CD8-positive, alpha-beta T cell (primary cell): ENCODE measurements at regions of chr14 and their contacts with region 1.

Region 1: GRCh38 chr14:23006544-23007419 is 3.2 kb downstream of the C14orf93 start:
- DNase-seq: peak; percentile 93 to 99 (median 96)
- ATAC-seq: peak; percentile 92
- H3K4me3 ChIP-seq: peak overlapping the region; percentile 84 to 87
- H3K4me3 Mint-ChIP-seq: peak overlapping the region; percentile 90
- H3K27ac ChIP-seq: peak overlapping the region; percentile 80 to 84
- H3K27ac Mint-ChIP-seq: peak overlapping the region; percentile 98
- H3K4me1 ChIP-seq: peaks cover 20% of the 10 kb centered on the region
- H3K4me1 Mint-ChIP-seq: peaks cover 41% of the 10 kb centered on the region
- H3K27me3 ChIP-seq: no peaks in the 10 kb centered on the region
- H3K27me3 Mint-ChIP-seq: no peaks in the 10 kb centered on the region
- CTCF ChIP-seq: no peak

Region 2: GRCh38 chr14:22955702-22956569 is 50.8 kb before region 1 on chr14:
- CTCF ChIA-PET with region 1: interaction called, 7 read pairs
- POLR2A ChIA-PET with region 1: interaction called, 9 read pairs
- intact Hi-C with region 1: loop called in 1 of 2 experiments (anchors 1 kb)
- DNase-seq: no peak
- ATAC-seq: no peak
- H3K4me3 ChIP-seq: peak overlapping the region; percentile 79 to 95
- H3K4me3 Mint-ChIP-seq: peak overlapping the region; percentile 90
- H3K27ac ChIP-seq: peak overlapping the region; percentile 69 to 84
- H3K27ac Mint-ChIP-seq: peak overlapping the region; percentile 91
- H3K4me1 ChIP-seq: peaks cover 16% of the 10 kb centered on the region
- H3K4me1 Mint-ChIP-seq: peaks cover 16% of the 10 kb centered on the region
- H3K27me3 ChIP-seq: no peaks in the 10 kb centered on the region
- H3K27me3 Mint-ChIP-seq: no peaks in the 10 kb centered on the region
- CTCF ChIP-seq: no peak

Region 3: DNA sequence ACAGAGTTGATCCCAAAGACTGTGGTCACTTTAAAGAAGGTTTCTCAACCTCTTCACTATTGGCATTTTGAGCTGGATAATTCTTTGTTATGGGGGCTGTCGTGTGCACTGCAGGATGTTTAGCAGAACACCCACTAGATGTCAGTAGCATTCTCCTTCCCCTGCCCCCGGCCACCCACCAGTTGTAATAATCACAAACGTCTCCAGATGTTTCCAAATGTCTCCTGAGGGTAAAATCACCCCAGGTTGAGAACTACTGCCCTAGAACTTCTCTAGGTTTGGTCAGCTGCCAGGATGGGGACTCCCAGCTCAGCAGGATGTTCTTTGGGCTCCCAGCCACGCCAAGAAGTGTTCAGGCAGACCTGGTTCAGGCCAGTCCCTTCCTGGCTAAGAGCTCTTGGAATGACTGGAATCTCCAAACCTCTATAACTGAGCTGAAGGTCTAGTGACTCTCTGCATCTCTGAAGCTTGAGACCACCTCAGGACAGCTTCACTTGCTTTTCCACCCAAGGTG is 12.0 kb before region 1 on chr14:
- CTCF ChIA-PET with region 1: interaction called, 59 read pairs
- POLR2A ChIA-PET with region 1: interaction called, 17 read pairs
- intact Hi-C with region 1: no loop called
- DNase-seq: peak in 7 of 9 experiments; percentile 13 to 63 (median 46)
- ATAC-seq: peak; percentile 85
- H3K4me3 ChIP-seq: no peak overlapping the region
- H3K4me3 Mint-ChIP-seq: no peak overlapping the region
- H3K27ac ChIP-seq: no peak overlapping the region
- H3K27ac Mint-ChIP-seq: no peak overlapping the region
- H3K4me1 ChIP-seq: peaks cover 3% of the 10 kb centered on the region
- H3K4me1 Mint-ChIP-seq: peaks cover 5% of the 10 kb centered on the region
- H3K27me3 ChIP-seq: no peaks in the 10 kb centered on the region
- H3K27me3 Mint-ChIP-seq: no peaks in the 10 kb centered on the region
- CTCF ChIP-seq: peak; percentile 46

Region 4: GRCh38 chr14:23025151-23025814 is 18.5 kb after region 1 on chr14:
- CTCF ChIA-PET with region 1: interaction called, 9 read pairs
- POLR2A ChIA-PET with region 1: interaction called, 25 read pairs
- intact Hi-C with region 1: no loop called
- DNase-seq: no peak
- ATAC-seq: no peak
- H3K4me3 ChIP-seq: no peak overlapping the region
- H3K4me3 Mint-ChIP-seq: no peak overlapping the region
- H3K27ac ChIP-seq: no peak overlapping the region
- H3K27ac Mint-ChIP-seq: peak overlapping the region; percentile 72
- H3K4me1 ChIP-seq: peaks cover 32% of the 10 kb centered on the region
- H3K4me1 Mint-ChIP-seq: peaks cover 66% of the 10 kb centered on the region
- H3K27me3 ChIP-seq: no peaks in the 10 kb centered on the region
- H3K27me3 Mint-ChIP-seq: no peaks in the 10 kb centered on the region
- CTCF ChIP-seq: no peak

Region 5: GRCh38 chr14:23034483-23035302 is 27.9 kb after region 1 on chr14 and contains the start of gene PSMB5:
- CTCF ChIA-PET with region 1: interaction called, 7 read pairs
- POLR2A ChIA-PET with region 1: interaction called, 18 read pairs
- intact Hi-C with region 1: loop called (anchors 1 kb)
- DNase-seq: peak; percentile 74 to 97 (median 87)
- ATAC-seq: peak; percentile 91
- H3K4me3 ChIP-seq: peak within 1 kb of the TSS; percentile 67 to 71
- H3K4me3 Mint-ChIP-seq: peak within 1 kb of the TSS; percentile 90
- H3K27ac ChIP-seq: peak within 1 kb of the TSS; percentile 75 to 97
- H3K27ac Mint-ChIP-seq: peak within 1 kb of the TSS; percentile 98
- H3K4me1 ChIP-seq: peaks cover 21% of the 10 kb centered on the region
- H3K4me1 Mint-ChIP-seq: peaks cover 34% of the 10 kb centered on the region
- H3K27me3 ChIP-seq: no peaks in the 10 kb centered on the region
- H3K27me3 Mint-ChIP-seq: no peaks in the 10 kb centered on the region
- CTCF ChIP-seq: no peak
- total RNA-seq, gene PSMB5: 18.6 to 20.2 TPM

Region 6: GRCh38 chr14:23095196-23096108 is 88.7 kb after region 1 on chr14 and contains the start of gene C14orf119:
- CTCF ChIA-PET with region 1: no interaction called
- POLR2A ChIA-PET with region 1: interaction called, 13 read pairs
- intact Hi-C with region 1: no loop called
- DNase-seq: peak in 8 of 9 experiments; percentile 98 to 100 (median 100)
- ATAC-seq: peak; percentile 86
- H3K4me3 ChIP-seq: peak within 1 kb of the TSS; percentile 81 to 93
- H3K4me3 Mint-ChIP-seq: no peak within 1 kb of the TSS
- H3K27ac ChIP-seq: peak within 1 kb of the TSS; percentile 93 to 98
- H3K27ac Mint-ChIP-seq: no peak within 1 kb of the TSS
- H3K4me1 ChIP-seq: peaks cover 39% of the 10 kb centered on the region
- H3K4me1 Mint-ChIP-seq: peaks cover 51% of the 10 kb centered on the region
- H3K27me3 ChIP-seq: no peaks in the 10 kb centered on the region
- H3K27me3 Mint-ChIP-seq: no peaks in the 10 kb centered on the region
- CTCF ChIP-seq: no peak
- total RNA-seq, gene C14orf119: 3.5 to 3.8 TPM

Region 7: GRCh38 chr14:23916004-23916403 is 909.2 kb after region 1 on chr14:
- CTCF ChIA-PET with region 1: no interaction called
- POLR2A ChIA-PET with region 1: no interaction called
- intact Hi-C with region 1: no loop called
- DNase-seq: no peak
- ATAC-seq: no peak
- H3K4me3 ChIP-seq: no peak overlapping the region
- H3K4me3 Mint-ChIP-seq: no peak overlapping the region
- H3K27ac ChIP-seq: no peak overlapping the region
- H3K27ac Mint-ChIP-seq: no peak overlapping the region
- H3K4me1 ChIP-seq: no peaks in the 10 kb centered on the region
- H3K4me1 Mint-ChIP-seq: no peaks in the 10 kb centered on the region
- H3K27me3 ChIP-seq: no peaks in the 10 kb centered on the region
- H3K27me3 Mint-ChIP-seq: peaks cover 9% of the 10 kb centered on the region
- CTCF ChIP-seq: no peak